K562 (cell line): ENCODE measurements at regions of chr1 and their contacts with region 1.

Region 1: DNA sequence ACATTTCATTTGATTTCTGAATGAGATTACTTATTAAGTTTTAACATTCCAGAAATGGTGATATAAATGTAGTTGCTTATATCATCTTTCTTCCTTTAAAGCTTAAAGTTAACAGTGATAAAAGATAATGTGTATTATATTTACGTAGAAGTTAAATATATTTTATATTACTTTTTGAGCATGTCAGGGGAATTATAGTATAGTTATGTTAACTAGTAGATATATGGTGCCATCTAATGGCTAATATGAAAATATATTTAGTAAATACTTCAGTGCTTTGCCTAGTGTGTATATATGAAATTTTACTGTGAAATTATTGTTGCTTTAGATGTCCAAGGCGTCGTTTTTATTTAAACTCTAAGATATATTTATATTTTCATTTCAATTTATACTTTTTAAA is 51.5 kb downstream of the SYT14 start:
- DNase-seq: peak in 3 of 4 experiments; percentile 7 to 14 (median 12)
- ATAC-seq: peak; percentile 73; the same call in 2 of the 3 replicates
- H3K4me3 ChIP-seq: no peak overlapping the region
- H3K27ac ChIP-seq: no peak overlapping the region
- H3K4me1 ChIP-seq: no peaks in the 10 kb centered on the region
- H3K27me3 ChIP-seq: no peaks in the 10 kb centered on the region
- CTCF ChIP-seq: peak in 1 of 3 experiments; percentile 52; a peak in 2 of 6 replicates
- EP300 ChIP-seq: no peak
- POLR2A ChIP-seq: no peak
- RAD21 ChIP-seq: peak; percentile 65 to 82

Region 2: GRCh38 chr1:209576798-209577197 is 412.7 kb before region 1 on chr1:
- CTCF ChIA-PET with region 1: no interaction called
- POLR2A ChIA-PET with region 1: no interaction called
- in situ Hi-C with region 1: loop called (anchors 25 kb)
- intact Hi-C with region 1: loop called (anchors 10 kb)
- DNase-seq: peak; percentile 76 to 83 (median 82)
- ATAC-seq: peak; percentile 99
- H3K4me3 ChIP-seq: no peak overlapping the region
- H3K27ac ChIP-seq: no peak overlapping the region
- H3K4me1 ChIP-seq: no peaks in the 10 kb centered on the region
- H3K27me3 ChIP-seq: peaks cover 3% of the 10 kb centered on the region in 2 experiments; a peak in 2 of 5 replicates
- CTCF ChIP-seq: peak; percentile 85 to 96 (median 94)
- EP300 ChIP-seq: no peak
- POLR2A ChIP-seq: no peak
- RAD21 ChIP-seq: peak; percentile 88 to 94

Region 3: GRCh38 chr1:209585672-209586071 is 403.9 kb before region 1 on chr1:
- CTCF ChIA-PET with region 1: no interaction called
- POLR2A ChIA-PET with region 1: no interaction called
- in situ Hi-C with region 1: loop called (anchors 25 kb)
- intact Hi-C with region 1: loop called (anchors 10 kb)
- DNase-seq: no peak
- ATAC-seq: no peak; the same call in 2 of the 3 replicates
- H3K4me3 ChIP-seq: no peak overlapping the region
- H3K27ac ChIP-seq: no peak overlapping the region
- H3K4me1 ChIP-seq: peaks cover 0 to 3% of the 10 kb centered on the region in 2 experiments; a peak in 1 of 5 replicates
- H3K27me3 ChIP-seq: peaks cover 22 to 38% of the 10 kb centered on the region in 2 experiments; a peak in 4 of 5 replicates
- CTCF ChIP-seq: no peak
- EP300 ChIP-seq: no peak
- POLR2A ChIP-seq: no peak
- RAD21 ChIP-seq: no peak

Region 4: DNA sequence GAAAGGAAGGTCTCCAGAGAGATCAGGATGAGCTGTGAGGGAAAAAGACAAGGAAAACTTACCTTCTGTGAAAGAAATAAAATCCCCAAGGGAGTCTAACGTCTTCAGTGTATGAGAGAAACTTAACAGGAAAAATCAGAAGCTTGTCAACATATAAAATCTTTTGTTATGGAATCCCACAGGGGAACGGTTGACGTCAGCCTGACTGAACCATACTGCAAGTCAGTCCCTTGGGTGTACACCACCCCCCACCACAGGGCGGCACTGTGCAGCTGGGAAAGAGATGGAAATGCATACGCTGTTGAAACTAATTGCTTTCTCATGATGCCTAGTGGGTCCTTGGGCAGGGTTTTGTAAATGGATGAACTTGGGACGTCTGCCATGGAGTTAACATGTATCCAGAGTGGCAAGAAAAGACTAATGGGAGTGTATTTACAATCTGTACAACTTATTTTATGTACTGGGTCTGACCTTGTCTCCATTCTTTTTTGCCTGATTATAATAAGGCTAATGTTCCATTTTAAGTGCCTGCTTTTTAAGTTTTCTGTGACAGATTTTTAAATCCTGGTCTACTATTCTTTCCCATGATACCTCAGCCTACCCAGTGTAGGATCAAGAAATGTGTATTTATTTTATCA is 139.1 kb before region 1 on chr1:
- CTCF ChIA-PET with region 1: interaction called, 22 read pairs
- POLR2A ChIA-PET with region 1: no interaction called
- in situ Hi-C with region 1: no loop called
- intact Hi-C with region 1: no loop called
- DNase-seq: peak; percentile 68 to 79 (median 73)
- ATAC-seq: peak; percentile 98
- H3K4me3 ChIP-seq: no peak overlapping the region
- H3K27ac ChIP-seq: no peak overlapping the region
- H3K4me1 ChIP-seq: no peaks in the 10 kb centered on the region
- H3K27me3 ChIP-seq: no peaks in the 10 kb centered on the region
- CTCF ChIP-seq: peak; percentile 71 to 94 (median 79)
- EP300 ChIP-seq: no peak
- POLR2A ChIP-seq: no peak
- RAD21 ChIP-seq: peak; percentile 46 to 61

Region 5: GRCh38 chr1:209860293-209860881 is 129.1 kb before region 1 on chr1:
- CTCF ChIA-PET with region 1: interaction called, 68 read pairs
- POLR2A ChIA-PET with region 1: no interaction called
- in situ Hi-C with region 1: no loop called
- intact Hi-C with region 1: loop called (anchors 1 kb)
- DNase-seq: peak; percentile 84 to 92 (median 91)
- ATAC-seq: peak; percentile 99
- H3K4me3 ChIP-seq: no peak overlapping the region
- H3K27ac ChIP-seq: no peak overlapping the region
- H3K4me1 ChIP-seq: no peaks in the 10 kb centered on the region
- H3K27me3 ChIP-seq: peaks cover 2 to 14% of the 10 kb centered on the region in 2 experiments; a peak in 3 of 5 replicates
- CTCF ChIP-seq: peak; percentile 89 to 94 (median 91)
- EP300 ChIP-seq: no peak
- POLR2A ChIP-seq: no peak
- RAD21 ChIP-seq: peak; percentile 92 to 96

Region 6: DNA sequence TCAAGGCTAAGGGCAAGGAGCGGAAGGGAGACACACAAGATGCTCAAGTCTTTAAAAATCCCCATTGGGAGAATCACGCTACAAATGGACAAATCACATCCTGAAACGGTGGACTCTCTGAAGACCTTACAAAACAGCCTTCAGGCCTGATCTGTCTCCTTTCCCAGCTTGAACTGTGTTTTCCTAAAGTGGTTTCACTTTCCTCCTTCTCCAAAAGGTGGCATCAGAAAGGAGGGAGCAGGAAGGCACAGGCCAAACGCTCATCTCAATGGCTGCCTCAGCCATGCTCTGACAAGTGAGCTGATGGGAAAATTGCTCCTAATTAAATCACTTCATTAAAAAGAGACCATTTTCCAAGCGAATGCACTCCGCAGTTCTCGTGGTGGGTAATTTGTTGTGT is 114.0 kb before region 1 on chr1:
- CTCF ChIA-PET with region 1: interaction called, 4 read pairs
- POLR2A ChIA-PET with region 1: no interaction called
- in situ Hi-C with region 1: loop called (anchors 5 kb)
- intact Hi-C with region 1: no loop called
- DNase-seq: peak in 1 of 4 experiments; percentile 25
- ATAC-seq: peak; percentile 84
- H3K4me3 ChIP-seq: no peak overlapping the region
- H3K27ac ChIP-seq: no peak overlapping the region
- H3K4me1 ChIP-seq: no peaks in the 10 kb centered on the region; a peak in 1 of 5 replicates
- H3K27me3 ChIP-seq: peaks cover 9 to 13% of the 10 kb centered on the region in 2 experiments; a peak in 4 of 5 replicates
- CTCF ChIP-seq: peak in 2 of 3 experiments; percentile 28 to 52; a peak in 2 of 6 replicates
- EP300 ChIP-seq: no peak
- POLR2A ChIP-seq: no peak
- RAD21 ChIP-seq: peak; percentile 25 to 59; a peak in 2 of 4 replicates